ENCODE measurements at regions of chr9 and their contacts with region 1.

Region 1: DNA sequence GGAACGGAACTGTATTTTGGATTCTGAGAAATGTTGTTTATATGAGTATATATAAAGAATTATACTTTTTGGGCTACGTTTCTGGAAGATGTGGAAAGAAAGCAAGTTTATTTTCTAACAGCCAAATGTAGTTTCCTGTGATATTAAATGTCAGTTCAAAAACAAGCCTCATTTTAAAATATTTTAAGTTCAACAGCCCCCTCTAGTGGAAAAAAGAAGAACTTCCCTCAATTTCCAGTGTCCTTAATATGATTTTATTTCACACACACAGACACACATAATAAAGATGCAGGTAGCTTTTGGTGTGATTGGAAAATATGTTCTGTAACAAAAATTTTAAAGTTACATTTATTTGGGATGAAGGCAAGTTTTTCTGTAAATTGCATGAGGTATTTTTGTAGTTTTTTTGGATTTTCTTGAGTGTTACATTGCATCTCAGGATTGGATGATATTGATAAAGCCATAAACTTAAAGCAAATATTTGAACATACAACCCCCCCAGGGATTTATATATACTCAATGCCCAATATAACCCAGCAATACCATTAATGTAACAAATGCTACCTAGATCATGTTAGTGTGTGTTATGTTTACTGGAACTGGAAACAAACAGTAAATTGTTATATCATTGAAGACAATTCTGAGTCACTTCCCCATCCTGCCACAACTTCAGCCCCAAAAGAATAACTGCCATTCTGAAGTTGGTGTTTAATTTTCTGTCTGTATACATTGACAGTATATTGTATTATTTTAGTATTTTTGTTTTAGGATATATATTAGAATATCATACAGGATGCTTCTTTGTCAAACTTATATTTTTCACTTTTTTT is 54.0 kb downstream of the CCDC171 start:
- DNase-seq: peak; percentile 44
- CTCF ChIP-seq: peak; percentile 50

Region 2: DNA sequence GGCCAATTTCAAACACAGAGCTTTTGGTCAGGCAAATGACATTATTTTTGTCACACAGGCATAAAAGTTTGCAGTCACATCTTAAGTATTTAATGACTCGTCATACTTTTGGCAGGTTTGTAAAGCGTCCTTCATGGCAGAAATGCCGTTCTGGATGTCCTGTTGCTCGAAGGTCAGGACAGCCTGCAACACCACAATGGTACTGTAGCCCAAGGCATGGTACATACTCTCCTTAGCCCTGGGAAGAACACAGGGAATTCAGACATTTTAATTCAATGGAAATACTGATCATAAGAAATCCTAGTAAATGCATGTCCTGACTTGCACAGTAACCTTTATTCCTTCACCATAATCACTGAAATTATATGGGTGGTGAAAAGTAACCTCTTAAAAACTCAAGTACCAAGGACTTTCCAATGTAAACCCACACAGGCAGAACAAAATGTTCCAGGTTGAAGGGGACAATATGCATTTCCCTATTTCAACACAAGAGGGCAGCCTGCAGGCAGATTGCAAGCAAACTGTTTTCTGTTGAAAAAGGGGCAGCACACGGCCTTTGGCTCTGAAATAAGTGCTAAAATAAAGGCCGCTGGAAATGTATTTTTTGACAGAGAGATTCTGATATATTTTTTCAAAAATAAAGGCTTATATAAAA is 395.6 kb before region 1 on chr9:
- CTCF ChIA-PET with region 1: interaction called, 14 read pairs
- POLR2A ChIA-PET with region 1: no interaction called
- DNase-seq: peak; percentile 53
- CTCF ChIP-seq: peak; percentile 85

Region 3: DNA sequence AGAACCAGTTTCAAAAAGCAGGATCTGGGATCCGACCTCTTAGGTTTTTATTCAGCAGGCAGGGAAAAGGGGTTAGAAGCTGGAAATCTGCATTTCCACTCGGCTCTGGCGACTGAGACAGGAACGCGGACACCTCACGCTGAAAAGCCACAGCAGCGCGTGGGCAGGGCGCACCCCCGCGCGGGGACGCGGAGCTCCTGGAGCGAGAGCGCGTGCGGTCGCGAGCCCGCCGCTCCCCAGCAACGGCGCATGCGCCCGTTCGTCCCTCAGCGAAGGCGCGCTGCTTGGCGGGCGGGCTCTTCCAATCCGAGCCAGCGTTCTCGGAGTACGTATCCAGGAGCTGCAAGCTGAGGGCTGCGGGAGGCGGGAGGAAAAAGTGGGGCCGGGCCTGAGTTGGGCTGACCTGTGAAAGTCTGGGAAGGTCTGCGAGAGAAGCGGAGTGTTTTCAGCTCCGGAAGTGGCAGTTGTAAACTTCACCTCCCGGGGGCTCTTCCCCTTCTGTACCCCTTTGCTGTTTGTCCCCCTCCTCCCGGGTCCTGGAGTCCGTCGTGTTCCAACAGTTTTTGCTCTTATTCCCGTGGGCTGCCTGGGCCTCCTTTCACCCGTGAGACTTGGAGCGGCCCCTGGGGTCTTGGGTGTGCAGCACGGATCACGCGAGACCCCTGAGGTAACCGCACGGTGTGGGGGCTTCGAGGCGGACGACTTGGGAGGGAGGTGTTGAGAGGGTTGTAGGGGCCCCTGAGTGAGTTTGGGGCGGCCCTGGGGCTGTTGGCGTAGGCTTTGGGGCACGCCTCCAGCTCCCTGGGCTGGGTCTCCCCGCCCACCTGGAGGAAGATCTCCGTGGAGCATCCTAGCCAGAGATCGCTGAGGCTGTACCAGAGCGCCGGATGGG is 54.0 kb before region 1 on chr9 and contains the start of gene CCDC171:
- CTCF ChIA-PET with region 1: interaction called, 10 read pairs
- POLR2A ChIA-PET with region 1: no interaction called
- DNase-seq: peak; percentile 97
- CTCF ChIP-seq: no peak

Region 4: GRCh38 chr9:16368237-16369087 is 761.6 kb after region 1 on chr9:
- CTCF ChIA-PET with region 1: no interaction called
- POLR2A ChIA-PET with region 1: no interaction called
- DNase-seq: no peak
- CTCF ChIP-seq: no peak

Measured in GM10248 (cell line).